B cell (primary cell): ENCODE measurements at regions of chr11 and their contacts with region 1.

Region 1: DNA sequence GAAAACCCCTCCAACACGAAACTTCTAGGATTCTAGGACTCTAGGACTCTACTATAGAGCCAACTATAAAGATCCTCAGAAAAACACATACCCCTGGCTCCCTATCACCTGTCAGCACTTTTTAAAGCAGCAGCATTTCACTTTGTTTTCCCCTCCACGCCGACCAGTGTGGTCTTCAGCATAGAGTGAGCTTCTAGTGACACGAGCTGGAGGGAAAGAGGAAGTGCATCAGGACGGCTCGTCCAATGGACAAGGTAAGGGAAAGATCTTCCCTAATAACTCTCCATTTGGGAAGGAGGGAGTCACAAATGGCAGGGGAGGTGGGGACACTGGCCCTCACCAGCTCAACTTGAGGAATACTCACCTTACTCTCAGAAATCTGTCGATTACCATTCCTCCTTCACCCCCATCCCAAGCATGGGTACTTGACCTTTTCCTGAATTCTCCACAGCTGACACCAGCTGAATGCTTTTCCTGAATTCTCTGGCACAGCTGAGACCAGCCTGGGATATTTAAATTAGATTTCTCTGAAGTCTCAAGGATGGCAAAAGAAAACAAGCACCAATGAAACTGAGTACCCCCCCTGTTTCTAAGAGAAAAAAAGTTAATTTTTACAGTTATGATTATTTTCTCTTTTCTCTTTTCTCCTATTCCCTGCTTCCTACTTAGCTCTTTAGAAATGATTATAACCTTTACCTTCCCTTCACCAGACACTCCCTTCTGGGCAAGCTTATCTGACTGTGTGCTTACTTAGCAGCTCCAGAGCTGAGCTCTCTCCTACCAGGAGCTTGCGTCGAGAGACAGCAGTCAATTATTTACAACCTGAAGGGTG is 33.3 kb upstream of the NNMT start:
- DNase-seq: peak; percentile 64
- ATAC-seq: no peak
- H3K4me3 ChIP-seq: no peak overlapping the region
- H3K4me3 Mint-ChIP-seq: no peak overlapping the region
- H3K27ac ChIP-seq: no peak overlapping the region
- H3K27ac Mint-ChIP-seq: no peak overlapping the region
- H3K4me1 ChIP-seq: peaks cover 30 to 31% of the 10 kb centered on the region in 2 donors
- H3K4me1 Mint-ChIP-seq: peaks cover 29% of the 10 kb centered on the region
- H3K27me3 ChIP-seq: peaks cover 0 to 3% (median 1%) of the 10 kb centered on the region in 4 experiments
- H3K27me3 Mint-ChIP-seq: no peaks in the 10 kb centered on the region
- CTCF ChIP-seq: peak; percentile 76

Region 2: GRCh38 chr11:113796663-113797259 is 466.1 kb before region 1 on chr11:
- CTCF ChIA-PET with region 1: interaction called, 207 read pairs
- POLR2A ChIA-PET with region 1: interaction called, 4 read pairs
- intact Hi-C with region 1: no loop called
- DNase-seq: peak; percentile 47
- ATAC-seq: peak; percentile 75
- H3K4me3 ChIP-seq: no peak overlapping the region
- H3K4me3 Mint-ChIP-seq: no peak overlapping the region
- H3K27ac ChIP-seq: no peak overlapping the region
- H3K27ac Mint-ChIP-seq: no peak overlapping the region
- H3K4me1 ChIP-seq: no peaks in the 10 kb centered on the region
- H3K4me1 Mint-ChIP-seq: no peaks in the 10 kb centered on the region
- H3K27me3 ChIP-seq: no peaks in the 10 kb centered on the region
- H3K27me3 Mint-ChIP-seq: no peaks in the 10 kb centered on the region
- CTCF ChIP-seq: peak; percentile 72

Region 3: DNA sequence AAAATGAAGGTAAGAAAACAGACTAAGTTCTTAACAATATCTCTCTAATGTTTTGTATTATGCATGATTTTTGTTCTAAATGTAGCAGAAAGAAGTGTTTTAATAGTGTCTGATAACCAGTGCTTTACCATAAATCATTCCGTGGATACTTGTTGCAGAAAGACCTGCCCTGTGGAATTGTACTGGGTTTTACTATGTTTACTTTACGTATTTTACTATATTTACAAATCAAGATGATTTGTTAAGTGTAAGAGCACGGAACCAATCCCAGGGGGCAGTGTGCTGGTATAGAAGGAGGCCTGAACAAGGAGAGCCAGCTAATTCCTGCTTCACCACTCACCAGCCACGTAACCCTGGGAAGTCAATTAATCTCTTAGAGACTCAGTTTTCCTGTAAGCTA is 356.9 kb before region 1 on chr11:
- CTCF ChIA-PET with region 1: interaction called, 43 read pairs
- POLR2A ChIA-PET with region 1: no interaction called
- intact Hi-C with region 1: no loop called
- DNase-seq: no peak
- ATAC-seq: no peak
- H3K4me3 ChIP-seq: no peak overlapping the region
- H3K4me3 Mint-ChIP-seq: no peak overlapping the region
- H3K27ac ChIP-seq: no peak overlapping the region
- H3K27ac Mint-ChIP-seq: no peak overlapping the region
- H3K4me1 ChIP-seq: no peaks in the 10 kb centered on the region
- H3K4me1 Mint-ChIP-seq: peaks cover 1% of the 10 kb centered on the region
- H3K27me3 ChIP-seq: no peaks in the 10 kb centered on the region
- H3K27me3 Mint-ChIP-seq: no peaks in the 10 kb centered on the region
- CTCF ChIP-seq: no peak

Region 4: GRCh38 chr11:114017723-114018122 is 245.2 kb before region 1 on chr11:
- CTCF ChIA-PET with region 1: interaction called, 17 read pairs
- POLR2A ChIA-PET with region 1: no interaction called
- intact Hi-C with region 1: no loop called
- DNase-seq: no peak
- ATAC-seq: no peak
- H3K4me3 ChIP-seq: no peak overlapping the region
- H3K4me3 Mint-ChIP-seq: no peak overlapping the region
- H3K27ac ChIP-seq: no peak overlapping the region
- H3K27ac Mint-ChIP-seq: no peak overlapping the region
- H3K4me1 ChIP-seq: no peaks in the 10 kb centered on the region
- H3K4me1 Mint-ChIP-seq: no peaks in the 10 kb centered on the region
- H3K27me3 ChIP-seq: peaks cover 0 to 2% (median 0%) of the 10 kb centered on the region in 4 experiments
- H3K27me3 Mint-ChIP-seq: peaks cover 4% of the 10 kb centered on the region
- CTCF ChIP-seq: no peak

Region 5: DNA sequence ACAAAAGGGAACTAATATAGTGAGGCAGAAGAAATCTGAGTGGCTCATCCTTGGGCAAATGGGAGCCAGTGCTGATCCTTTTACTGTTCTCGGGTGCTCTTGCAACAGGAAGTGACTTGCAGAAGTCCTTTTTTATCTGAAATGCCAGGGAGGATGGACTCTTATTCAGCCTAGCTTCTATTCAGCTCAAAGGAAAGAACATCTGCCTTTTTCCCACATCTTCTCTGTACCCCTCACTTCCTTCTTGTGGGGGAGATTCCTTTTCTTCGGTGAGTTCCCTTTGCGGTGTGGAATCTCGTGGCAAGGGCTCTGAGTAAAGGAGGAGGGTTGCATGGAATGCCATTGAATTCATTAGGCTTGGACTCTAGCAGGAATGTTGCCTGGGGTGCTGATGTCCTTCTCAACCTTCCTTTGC is 127.2 kb before region 1 on chr11:
- CTCF ChIA-PET with region 1: interaction called, 12 read pairs
- POLR2A ChIA-PET with region 1: no interaction called
- intact Hi-C with region 1: no loop called
- DNase-seq: no peak
- ATAC-seq: no peak
- H3K4me3 ChIP-seq: no peak overlapping the region
- H3K4me3 Mint-ChIP-seq: no peak overlapping the region
- H3K27ac ChIP-seq: no peak overlapping the region
- H3K27ac Mint-ChIP-seq: no peak overlapping the region
- H3K4me1 ChIP-seq: peaks cover 39 to 42% of the 10 kb centered on the region in 2 donors
- H3K4me1 Mint-ChIP-seq: peaks cover 44% of the 10 kb centered on the region
- H3K27me3 ChIP-seq: peaks cover 0 to 4% (median 1%) of the 10 kb centered on the region in 4 experiments
- H3K27me3 Mint-ChIP-seq: peaks cover 15% of the 10 kb centered on the region
- CTCF ChIP-seq: no peak

Region 6: DNA sequence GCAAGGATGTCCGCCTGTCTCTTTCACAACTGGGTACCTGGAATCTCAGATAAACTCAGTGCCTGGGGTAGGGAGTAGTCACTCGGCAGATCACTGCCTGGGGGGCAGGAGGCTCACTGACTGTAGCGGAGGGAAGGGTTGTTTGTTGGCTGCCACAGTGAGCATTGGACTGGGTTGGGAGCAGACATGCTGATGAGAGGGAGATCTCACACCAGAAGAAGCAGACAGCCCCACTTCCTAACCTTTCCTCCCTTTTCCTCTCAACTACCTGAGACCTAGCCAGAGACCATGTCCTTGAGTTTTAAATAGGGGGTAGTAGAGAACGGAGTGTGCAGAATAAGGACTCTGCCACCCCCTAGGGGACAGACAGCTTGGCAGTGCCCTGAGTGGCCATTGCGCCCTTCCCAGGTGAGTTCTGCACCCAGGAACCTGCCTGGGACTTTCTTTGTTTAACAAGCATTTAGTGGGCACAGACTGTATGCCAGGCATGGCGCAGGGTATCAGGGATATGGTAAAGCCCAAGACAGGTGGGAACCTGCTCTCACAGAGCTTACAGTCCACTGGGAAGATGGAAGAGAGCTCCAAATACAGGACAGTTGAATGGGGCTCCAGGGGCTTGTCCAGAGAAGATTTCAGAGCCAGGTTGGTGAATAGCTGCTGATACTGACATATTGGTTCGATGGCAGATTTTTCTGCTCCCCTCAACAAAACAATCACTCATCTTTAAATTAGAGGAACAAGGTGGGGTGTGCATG is 82.4 kb before region 1 on chr11:
- CTCF ChIA-PET with region 1: interaction called, 93 read pairs
- POLR2A ChIA-PET with region 1: interaction called, 7 read pairs
- intact Hi-C with region 1: no loop called
- DNase-seq: peak; percentile 59
- ATAC-seq: peak; percentile 59
- H3K4me3 ChIP-seq: no peak overlapping the region
- H3K4me3 Mint-ChIP-seq: peak overlapping the region; percentile 53
- H3K27ac ChIP-seq: peak overlapping the region; percentile 79 to 84
- H3K27ac Mint-ChIP-seq: peak overlapping the region; percentile 62
- H3K4me1 ChIP-seq: peaks cover 62 to 72% of the 10 kb centered on the region in 2 donors
- H3K4me1 Mint-ChIP-seq: peaks cover 69% of the 10 kb centered on the region
- H3K27me3 ChIP-seq: no peaks in the 10 kb centered on the region
- H3K27me3 Mint-ChIP-seq: peaks cover 2% of the 10 kb centered on the region
- CTCF ChIP-seq: peak; percentile 31

Region 7: DNA sequence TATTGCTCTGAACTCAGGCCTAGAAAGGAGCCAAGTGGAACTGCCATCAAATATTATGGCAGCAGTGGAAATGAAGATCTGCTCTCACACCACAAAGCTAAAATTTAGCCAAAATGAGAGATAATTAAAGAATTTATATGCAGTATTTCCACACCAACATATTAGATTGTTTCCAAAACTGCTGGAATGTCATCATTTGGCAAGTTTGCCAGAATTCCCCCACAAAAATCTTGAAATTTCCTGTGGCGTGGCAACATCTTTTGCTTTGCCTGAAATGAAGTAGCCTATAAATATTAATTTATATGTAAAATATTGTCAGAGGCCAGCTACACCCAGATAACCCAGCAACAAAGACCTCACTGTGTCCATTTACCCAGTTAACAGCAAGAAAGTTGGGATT is 123.6 kb after region 1 on chr11:
- CTCF ChIA-PET with region 1: no interaction called
- POLR2A ChIA-PET with region 1: no interaction called
- intact Hi-C with region 1: no loop called
- DNase-seq: no peak
- ATAC-seq: no peak
- H3K4me3 ChIP-seq: no peak overlapping the region
- H3K4me3 Mint-ChIP-seq: no peak overlapping the region
- H3K27ac ChIP-seq: no peak overlapping the region
- H3K27ac Mint-ChIP-seq: no peak overlapping the region
- H3K4me1 ChIP-seq: no peaks in the 10 kb centered on the region
- H3K4me1 Mint-ChIP-seq: no peaks in the 10 kb centered on the region
- H3K27me3 ChIP-seq: peaks cover 0 to 11% (median 2%) of the 10 kb centered on the region in 4 experiments
- H3K27me3 Mint-ChIP-seq: peaks cover 33% of the 10 kb centered on the region
- CTCF ChIP-seq: no peak

Region 8: GRCh38 chr11:114478768-114479167 is 215.9 kb after region 1 on chr11:
- CTCF ChIA-PET with region 1: no interaction called
- POLR2A ChIA-PET with region 1: no interaction called
- intact Hi-C with region 1: no loop called
- DNase-seq: no peak
- ATAC-seq: no peak
- H3K4me3 ChIP-seq: no peak overlapping the region
- H3K4me3 Mint-ChIP-seq: no peak overlapping the region
- H3K27ac ChIP-seq: no peak overlapping the region
- H3K27ac Mint-ChIP-seq: no peak overlapping the region
- H3K4me1 ChIP-seq: no peaks in the 10 kb centered on the region
- H3K4me1 Mint-ChIP-seq: peaks cover 8% of the 10 kb centered on the region
- H3K27me3 ChIP-seq: no peaks in the 10 kb centered on the region
- H3K27me3 Mint-ChIP-seq: peaks cover 4% of the 10 kb centered on the region
- CTCF ChIP-seq: no peak